Activated T-helper 1 cell treated with anti-CD3 and anti-CD28 coated beads, Interleukin-12 subunit alpha, Interleukin-12 subunit beta, Interleukin-2, Interleukin-4 antibody, amounts not matched to agents 30 ng/mL and 10 ng/mL and 1 ng/mL, durations not matched to agents 14 hours and 24 hours and 36 hours (primary cell): ENCODE measurements at regions of chr5 and their contacts with region 1.

Region 1: GRCh38 chr5:90598293-90598692 is 39.7 kb downstream of the ADGRV1 start:
- DNase-seq: no peak
- H3K4me3 Mint-ChIP-seq: no peak overlapping the region
- H3K27ac Mint-ChIP-seq: no peak overlapping the region
- H3K4me1 Mint-ChIP-seq: no peaks in the 10 kb centered on the region
- H3K27me3 Mint-ChIP-seq: no peaks in the 10 kb centered on the region

Region 2: DNA sequence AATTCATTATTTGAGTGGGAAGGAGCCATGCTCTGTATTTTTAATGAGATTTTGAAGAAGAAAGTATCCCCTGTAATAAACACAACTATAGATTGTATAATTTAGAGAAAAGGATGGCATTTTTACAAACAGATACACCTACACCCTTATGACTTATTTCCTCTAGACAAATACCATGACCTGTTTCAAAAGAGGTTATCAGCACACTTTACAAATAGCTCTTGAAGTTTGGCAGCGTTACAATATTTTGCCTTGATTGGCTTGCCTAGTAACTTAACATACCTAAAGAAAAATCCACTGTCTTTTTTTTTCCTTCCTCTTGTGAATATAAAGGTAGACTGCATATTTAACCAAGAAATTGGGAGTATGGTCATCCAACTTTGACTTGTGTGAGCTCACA is 160.2 kb before region 1 on chr5:
- intact Hi-C with region 1: no loop called
- DNase-seq: no peak
- H3K4me3 Mint-ChIP-seq: no peak overlapping the region
- H3K27ac Mint-ChIP-seq: no peak overlapping the region
- H3K4me1 Mint-ChIP-seq: peaks cover 10% of the 10 kb centered on the region
- H3K27me3 Mint-ChIP-seq: peaks cover 15% of the 10 kb centered on the region

Region 3: DNA sequence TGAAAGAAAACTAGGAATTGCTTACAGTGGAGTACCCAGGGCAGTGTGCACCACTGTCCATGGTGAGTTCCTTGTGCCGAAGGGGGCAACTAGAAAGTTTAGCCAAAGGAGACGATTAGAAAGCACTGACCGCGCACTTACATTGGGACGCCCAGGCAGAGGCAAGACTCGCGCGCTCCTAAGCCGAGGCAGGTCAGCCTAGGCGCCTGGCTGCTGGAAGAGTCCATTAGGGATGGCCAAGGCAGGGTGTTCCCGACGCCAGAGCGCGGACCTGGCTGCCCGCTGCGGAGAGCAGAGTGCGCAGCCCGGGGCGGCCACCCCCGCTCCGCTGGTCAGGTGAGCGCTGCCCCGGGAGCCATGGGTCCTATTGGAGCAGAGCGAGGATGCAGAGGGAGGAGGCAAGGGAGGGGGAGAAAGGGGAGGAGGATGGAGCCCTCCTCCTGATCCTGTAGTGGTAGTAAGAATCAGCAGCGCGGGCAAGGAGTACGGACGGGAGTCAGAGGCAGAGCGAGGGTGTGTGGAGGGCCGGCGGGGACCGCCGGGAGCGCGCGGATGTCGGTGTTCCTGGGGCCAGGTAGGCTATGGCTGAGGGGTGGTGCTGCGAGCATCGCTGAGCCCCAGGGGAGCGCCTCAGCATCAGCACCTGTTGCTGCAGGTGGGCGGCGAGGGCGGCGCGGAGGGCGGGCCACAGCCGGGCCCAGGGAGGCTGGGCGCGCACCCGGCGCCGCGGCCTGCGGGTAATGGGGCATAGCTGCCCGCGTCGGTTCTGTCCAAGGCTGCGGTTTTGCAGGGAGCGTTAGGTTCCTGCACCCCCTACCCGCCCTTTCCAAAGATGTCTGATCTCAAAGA is 39.7 kb before region 1 on chr5 and contains the start of gene ADGRV1:
- intact Hi-C with region 1: loop called (anchors 1 kb)
- DNase-seq: no peak
- H3K4me3 Mint-ChIP-seq: peak within 1 kb of the TSS; percentile 34
- H3K27ac Mint-ChIP-seq: no peak within 1 kb of the TSS
- H3K4me1 Mint-ChIP-seq: peaks cover 6% of the 10 kb centered on the region
- H3K27me3 Mint-ChIP-seq: peaks cover 70% of the 10 kb centered on the region
- total RNA-seq, gene ADGRV1: 0.05 TPM in 2 replicates

Region 4: GRCh38 chr5:90585337-90585986 is 12.8 kb before region 1 on chr5:
- intact Hi-C with region 1: no loop called
- DNase-seq: no peak
- H3K4me3 Mint-ChIP-seq: no peak overlapping the region
- H3K27ac Mint-ChIP-seq: no peak overlapping the region
- H3K4me1 Mint-ChIP-seq: no peaks in the 10 kb centered on the region
- H3K27me3 Mint-ChIP-seq: no peaks in the 10 kb centered on the region

Region 5: GRCh38 chr5:90709323-90710155 is 111.2 kb after region 1 on chr5:
- intact Hi-C with region 1: no loop called
- DNase-seq: no peak
- H3K4me3 Mint-ChIP-seq: no peak overlapping the region
- H3K27ac Mint-ChIP-seq: no peak overlapping the region
- H3K4me1 Mint-ChIP-seq: no peaks in the 10 kb centered on the region
- H3K27me3 Mint-ChIP-seq: no peaks in the 10 kb centered on the region